Adrenal gland (tissue), 19 donors: ENCODE measurements at regions of chrX and their contacts with region 1.

Region 1: GRCh38 chrX:132092439-132093065 is 35.3 kb downstream of the FRMD7 start:
- DNase-seq: peak; percentile 30 to 85 (median 63)
- H3K4me3 ChIP-seq: no peak overlapping the region
- H3K27ac ChIP-seq: no peak overlapping the region
- H3K4me1 ChIP-seq: no peaks in the 10 kb centered on the region
- H3K27me3 ChIP-seq: peaks cover 33% of the 10 kb centered on the region
- CTCF ChIP-seq: peak; percentile 58 to 76 (median 65)
- POLR2A ChIP-seq: no peak

Region 2: GRCh38 chrX:132226169-132226568 is 133.6 kb after region 1 on chrX:
- intact Hi-C with region 1: loop called in 1 of 2 experiments (anchors 10 kb)
- DNase-seq: no peak
- H3K4me3 ChIP-seq: no peak overlapping the region
- H3K27ac ChIP-seq: no peak overlapping the region
- H3K4me1 ChIP-seq: no peaks in the 10 kb centered on the region
- H3K27me3 ChIP-seq: no peaks in the 10 kb centered on the region
- CTCF ChIP-seq: peak; percentile 6 to 46 (median 30)
- POLR2A ChIP-seq: no peak

Region 3: DNA sequence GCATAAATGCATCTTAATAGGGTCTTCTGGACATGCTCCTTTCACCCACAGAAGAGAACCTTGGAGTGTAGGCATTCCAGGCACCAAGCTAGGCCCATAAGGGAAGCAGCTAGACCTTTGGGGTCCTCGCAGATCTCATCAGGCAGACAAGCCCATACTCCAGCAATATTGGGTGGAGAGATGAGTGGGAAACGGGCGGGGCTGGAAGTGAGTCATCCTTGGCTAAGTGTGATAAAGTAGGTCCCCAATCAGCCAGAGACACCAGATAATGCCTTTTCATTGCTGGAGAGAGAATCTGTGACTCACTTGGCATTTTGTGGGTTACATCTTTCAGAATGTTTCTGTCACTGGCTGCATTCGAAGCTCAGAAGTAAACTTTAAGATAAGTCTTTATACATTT is 529.6 kb after region 1 on chrX:
- intact Hi-C with region 1: loop called in 1 of 2 experiments (anchors 10 kb)
- DNase-seq: peak in 2 of 7 donors; percentile 14 to 18
- H3K4me3 ChIP-seq: no peak overlapping the region
- H3K27ac ChIP-seq: no peak overlapping the region
- H3K4me1 ChIP-seq: no peaks in the 10 kb centered on the region
- H3K27me3 ChIP-seq: peaks cover 29% of the 10 kb centered on the region
- CTCF ChIP-seq: no peak
- POLR2A ChIP-seq: no peak